Right ventricle myocardium inferior (tissue), 1 donor: ENCODE measurements at regions of chr18 and their contacts with region 1.

Region 1: DNA sequence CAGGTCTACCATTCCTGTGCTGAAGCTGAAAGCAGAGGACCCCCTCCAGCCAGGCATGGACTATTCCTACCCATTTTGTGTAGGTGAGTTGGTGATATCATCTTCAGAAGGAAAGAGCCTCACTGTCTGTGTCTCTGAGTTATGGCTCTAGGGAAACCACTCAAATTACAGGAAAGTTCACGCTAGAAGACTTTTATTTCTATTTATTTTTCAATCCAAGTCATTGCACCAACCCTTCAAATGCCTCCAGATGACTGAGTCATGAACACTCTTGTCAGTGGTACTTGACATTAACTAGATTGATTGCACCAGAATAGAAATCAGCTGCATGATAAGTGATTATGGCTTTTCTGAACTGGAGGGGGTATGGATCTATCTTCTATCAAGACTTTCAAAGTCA is 338.4 kb downstream of the MBD2 start:
- DNase-seq: no peak
- ATAC-seq: no peak

Region 2: GRCh38 chr18:53874103-53874502 is 12.0 kb before region 1 on chr18:
- intact Hi-C with region 1: no loop called
- DNase-seq: no peak
- ATAC-seq: no peak

Region 3: GRCh38 chr18:53944721-53945120 is 58.7 kb after region 1 on chr18:
- intact Hi-C with region 1: loop called (anchors 10 kb)
- DNase-seq: no peak
- ATAC-seq: no peak